ENCODE measurements at regions of chr14 and their contacts with region 1.

Region 1: GRCh38 chr14:69682621-69683263 is 71.3 kb downstream of the SUSD6 start:
- DNase-seq: no peak
- ATAC-seq: no peak
- H3K4me3 ChIP-seq: no peak overlapping the region
- H3K27ac ChIP-seq: no peak overlapping the region; the same call in 1 of the 2 replicates
- H3K4me1 ChIP-seq: peaks cover 13% of the 10 kb centered on the region
- H3K27me3 ChIP-seq: no peaks in the 10 kb centered on the region
- CTCF ChIP-seq: no peak
- POLR2A ChIP-seq: no peak
- RAD21 ChIP-seq: no peak

Region 2: GRCh38 chr14:69501423-69501838 is 181.3 kb before region 1 on chr14:
- CTCF ChIA-PET with region 1: no interaction called
- POLR2A ChIA-PET with region 1: interaction called, 10 read pairs
- dilution Hi-C with region 1: no loop called
- in situ Hi-C with region 1: no loop called
- intact Hi-C with region 1: no loop called
- DNase-seq: peak; percentile 15
- ATAC-seq: peak; percentile 54
- H3K4me3 ChIP-seq: no peak overlapping the region
- H3K27ac ChIP-seq: no peak overlapping the region
- H3K4me1 ChIP-seq: no peaks in the 10 kb centered on the region; the same call in 1 of the 2 replicates
- H3K27me3 ChIP-seq: peaks cover 46% of the 10 kb centered on the region
- CTCF ChIP-seq: no peak
- POLR2A ChIP-seq: no peak
- RAD21 ChIP-seq: no peak

Region 3: GRCh38 chr14:69921052-69921451 is 238.3 kb after region 1 on chr14:
- CTCF ChIA-PET with region 1: no interaction called
- POLR2A ChIA-PET with region 1: no interaction called
- dilution Hi-C with region 1: no loop called
- in situ Hi-C with region 1: no loop called
- intact Hi-C with region 1: no loop called
- DNase-seq: peak; percentile 92
- ATAC-seq: peak; percentile 86
- H3K4me3 ChIP-seq: no peak overlapping the region
- H3K27ac ChIP-seq: no peak overlapping the region
- H3K4me1 ChIP-seq: peaks cover 10% of the 10 kb centered on the region
- H3K27me3 ChIP-seq: no peaks in the 10 kb centered on the region
- CTCF ChIP-seq: no peak
- POLR2A ChIP-seq: no peak
- RAD21 ChIP-seq: no peak

Region 4: GRCh38 chr14:69997849-69998248 is 315.1 kb after region 1 on chr14:
- CTCF ChIA-PET with region 1: no interaction called
- POLR2A ChIA-PET with region 1: no interaction called
- dilution Hi-C with region 1: no loop called
- in situ Hi-C with region 1: no loop called
- intact Hi-C with region 1: no loop called
- DNase-seq: peak; percentile 96
- ATAC-seq: peak; percentile 15; the same call in 1 of the 2 replicates
- H3K4me3 ChIP-seq: no peak overlapping the region
- H3K27ac ChIP-seq: peak overlapping the region; percentile 86
- H3K4me1 ChIP-seq: peaks cover 27% of the 10 kb centered on the region
- H3K27me3 ChIP-seq: no peaks in the 10 kb centered on the region
- CTCF ChIP-seq: no peak
- POLR2A ChIP-seq: no peak
- RAD21 ChIP-seq: no peak

Measured in IMR-90 (cell line).